ENCODE measurements at regions of chr3 and their contacts with region 1.

Region 1: GRCh38 chr3:127857333-127857732 is 35.0 kb upstream of the MGLL start:
- DNase-seq: no peak
- ATAC-seq: no peak
- H3K4me3 ChIP-seq: no peak overlapping the region
- H3K27ac ChIP-seq: no peak overlapping the region
- H3K4me1 ChIP-seq: no peaks in the 10 kb centered on the region
- H3K27me3 ChIP-seq: peaks cover 0 to 22% of the 10 kb centered on the region in 2 experiments; a peak in 2 of 5 replicates
- CTCF ChIP-seq: no peak
- EP300 ChIP-seq: no peak
- POLR2A ChIP-seq: no peak
- RAD21 ChIP-seq: no peak

Region 2: GRCh38 chr3:127808197-127808596 is 49.1 kb before region 1 on chr3:
- CTCF ChIA-PET with region 1: no interaction called
- POLR2A ChIA-PET with region 1: no interaction called
- in situ Hi-C with region 1: no loop called
- intact Hi-C with region 1: no loop called
- DNase-seq: no peak
- ATAC-seq: no peak
- H3K4me3 ChIP-seq: no peak overlapping the region
- H3K27ac ChIP-seq: no peak overlapping the region
- H3K4me1 ChIP-seq: no peaks in the 10 kb centered on the region
- H3K27me3 ChIP-seq: no peaks in the 10 kb centered on the region
- CTCF ChIP-seq: no peak
- EP300 ChIP-seq: no peak
- POLR2A ChIP-seq: no peak
- RAD21 ChIP-seq: no peak

Region 3: GRCh38 chr3:127959846-127960245 is 102.5 kb after region 1 on chr3:
- CTCF ChIA-PET with region 1: interaction called, 5 read pairs
- POLR2A ChIA-PET with region 1: no interaction called
- in situ Hi-C with region 1: loop called (anchors 10 kb)
- intact Hi-C with region 1: no loop called
- DNase-seq: peak; percentile 23
- ATAC-seq: peak; percentile 71
- H3K4me3 ChIP-seq: no peak overlapping the region
- H3K27ac ChIP-seq: no peak overlapping the region
- H3K4me1 ChIP-seq: peaks cover 11% of the 10 kb centered on the region
- H3K27me3 ChIP-seq: 0 out of 5 replicates have a peak, but pooled peaks cover 0 to 8% of the 10 kb centered on the region in 2 experiments
- CTCF ChIP-seq: peak; percentile 74
- EP300 ChIP-seq: no peak
- POLR2A ChIP-seq: no peak
- RAD21 ChIP-seq: peak; percentile 26; the same call in 1 of the 2 replicates

Region 4: DNA sequence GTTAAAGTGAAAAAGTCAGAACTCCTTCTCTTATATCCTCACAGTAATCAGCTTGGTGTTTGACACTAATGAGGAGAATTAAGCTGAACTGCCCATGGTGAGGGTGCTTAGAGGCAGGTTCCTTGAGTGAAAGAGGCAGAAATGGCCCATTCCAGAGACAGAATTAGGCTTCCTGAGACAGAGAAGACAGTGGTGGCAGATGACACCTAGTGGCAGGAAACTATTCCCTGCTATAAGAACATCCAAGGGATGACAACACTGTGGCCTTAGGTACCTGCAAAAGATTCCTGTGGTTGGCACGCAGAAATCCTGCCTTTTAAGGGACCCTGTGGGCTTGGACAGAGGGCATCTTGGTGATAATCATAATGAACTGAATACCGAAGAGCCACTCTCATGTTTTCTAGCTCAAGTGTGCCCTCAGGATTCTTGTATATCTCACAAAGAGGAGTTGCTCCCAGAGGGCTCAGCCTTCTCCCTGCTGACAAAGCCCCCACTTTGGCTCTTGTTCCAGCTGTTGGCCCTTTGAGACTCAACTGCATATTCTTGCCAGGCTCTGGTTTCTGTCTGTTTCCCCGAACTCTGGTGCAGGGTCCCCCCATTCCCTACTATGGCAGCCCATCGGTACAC is 113.7 kb after region 1 on chr3:
- CTCF ChIA-PET with region 1: no interaction called
- POLR2A ChIA-PET with region 1: no interaction called
- in situ Hi-C with region 1: loop called (anchors 10 kb)
- intact Hi-C with region 1: loop called (anchors 2 kb)
- DNase-seq: peak; percentile 34
- ATAC-seq: peak; percentile 90
- H3K4me3 ChIP-seq: no peak overlapping the region
- H3K27ac ChIP-seq: no peak overlapping the region
- H3K4me1 ChIP-seq: peaks cover 13% of the 10 kb centered on the region
- H3K27me3 ChIP-seq: peaks cover 0 to 3% of the 10 kb centered on the region in 2 experiments; a peak in 1 of 5 replicates
- CTCF ChIP-seq: peak; percentile 78
- EP300 ChIP-seq: no peak
- POLR2A ChIP-seq: no peak
- RAD21 ChIP-seq: no peak